Activated CD4-positive, alpha-beta memory T cell treated with anti-CD3 and anti-CD28 coated beads for 36 hours (primary cell): ENCODE measurements at regions of chr2 and their contacts with region 1.

Region 1: GRCh38 chr2:99337113-99338028 is at the start of gene EIF5B:
- DNase-seq: peak; percentile 95
- H3K4me3 Mint-ChIP-seq: no peak within 1 kb of the TSS
- H3K27ac Mint-ChIP-seq: no peak within 1 kb of the TSS
- H3K4me1 Mint-ChIP-seq: peaks cover 55% of the 10 kb centered on the region
- H3K27me3 Mint-ChIP-seq: no peaks in the 10 kb centered on the region
- total RNA-seq, gene EIF5B: 69.7 to 72.0 TPM

Region 2: GRCh38 chr2:98356729-98357128 is 980.6 kb before region 1 on chr2:
- CTCF ChIA-PET with region 1: no interaction called
- POLR2A ChIA-PET with region 1: no interaction called
- intact Hi-C with region 1: no loop called
- DNase-seq: no peak
- H3K4me3 Mint-ChIP-seq: no peak overlapping the region
- H3K27ac Mint-ChIP-seq: no peak overlapping the region
- H3K4me1 Mint-ChIP-seq: no peaks in the 10 kb centered on the region
- H3K27me3 Mint-ChIP-seq: peaks cover 12% of the 10 kb centered on the region

Region 3: GRCh38 chr2:99141110-99142108 is 196.0 kb before region 1 on chr2 and contains the start of gene C2orf15:
- CTCF ChIA-PET with region 1: no interaction called
- POLR2A ChIA-PET with region 1: interaction called, 4 read pairs
- intact Hi-C with region 1: loop called (anchors 1 kb)
- DNase-seq: peak; percentile 98
- H3K4me3 Mint-ChIP-seq: peak within 1 kb of the TSS; percentile 93
- H3K27ac Mint-ChIP-seq: peak within 1 kb of the TSS; percentile 88
- H3K4me1 Mint-ChIP-seq: peaks cover 19% of the 10 kb centered on the region
- H3K27me3 Mint-ChIP-seq: no peaks in the 10 kb centered on the region
- total RNA-seq, gene C2orf15: 0.48 to 0.50 TPM

Region 4: DNA sequence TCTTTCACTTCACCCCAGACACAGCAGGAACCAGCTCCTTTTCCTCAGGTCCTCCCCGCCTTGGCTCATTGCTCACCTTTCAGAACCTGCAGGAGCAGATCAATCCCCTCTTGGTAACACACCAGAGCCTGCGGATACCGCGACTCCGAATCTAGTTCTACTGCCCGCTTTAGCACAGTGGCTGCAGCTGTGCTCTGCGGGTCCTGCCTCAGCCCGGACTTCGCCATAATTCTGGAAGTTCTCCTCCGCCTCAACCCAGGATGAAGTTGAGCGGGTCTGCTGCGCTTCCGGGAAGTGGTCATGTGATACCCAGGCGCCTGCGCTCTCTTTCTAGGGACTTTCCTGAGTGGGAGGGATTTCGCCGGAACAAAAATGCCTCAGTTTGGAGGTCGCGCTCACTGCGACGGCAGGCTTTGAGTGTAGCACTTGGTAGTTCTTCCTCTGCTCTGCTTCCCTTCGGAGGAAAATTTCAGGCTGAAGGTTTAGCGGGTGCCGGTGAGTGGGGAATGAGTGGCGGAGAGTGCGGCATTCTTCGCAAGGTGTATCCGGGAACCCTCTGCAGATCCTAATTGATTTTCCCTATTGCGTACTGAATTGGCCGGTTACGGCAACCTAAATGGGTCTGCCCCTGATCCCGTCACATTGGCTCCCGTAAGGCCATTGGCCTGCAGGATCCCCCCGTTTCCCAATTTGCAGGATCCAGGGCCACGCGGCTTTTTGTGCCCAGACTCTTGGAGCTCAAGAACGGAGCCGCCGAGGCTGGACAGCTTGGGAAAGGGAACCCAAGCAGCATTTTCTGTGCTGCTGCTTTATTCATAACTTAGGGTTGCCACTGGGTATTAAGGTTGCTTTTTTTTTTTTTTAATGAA is 156.4 kb before region 1 on chr2 and contains the starts of genes MITD1 and MRPL30:
- CTCF ChIA-PET with region 1: interaction called, 7 read pairs
- POLR2A ChIA-PET with region 1: interaction called, 10 read pairs
- intact Hi-C with region 1: loop called (anchors 1 kb)
- DNase-seq: peak; percentile 95
- H3K4me3 Mint-ChIP-seq: peak within 1 kb of the TSS; percentile 98
- H3K27ac Mint-ChIP-seq: peak within 1 kb of the TSS; percentile 97
- H3K4me1 Mint-ChIP-seq: peaks cover 49% of the 10 kb centered on the region
- H3K27me3 Mint-ChIP-seq: no peaks in the 10 kb centered on the region
- total RNA-seq, gene MITD1: 67.4 to 75.5 TPM
- total RNA-seq, gene MRPL30: 30.3 to 30.8 TPM

Region 5: DNA sequence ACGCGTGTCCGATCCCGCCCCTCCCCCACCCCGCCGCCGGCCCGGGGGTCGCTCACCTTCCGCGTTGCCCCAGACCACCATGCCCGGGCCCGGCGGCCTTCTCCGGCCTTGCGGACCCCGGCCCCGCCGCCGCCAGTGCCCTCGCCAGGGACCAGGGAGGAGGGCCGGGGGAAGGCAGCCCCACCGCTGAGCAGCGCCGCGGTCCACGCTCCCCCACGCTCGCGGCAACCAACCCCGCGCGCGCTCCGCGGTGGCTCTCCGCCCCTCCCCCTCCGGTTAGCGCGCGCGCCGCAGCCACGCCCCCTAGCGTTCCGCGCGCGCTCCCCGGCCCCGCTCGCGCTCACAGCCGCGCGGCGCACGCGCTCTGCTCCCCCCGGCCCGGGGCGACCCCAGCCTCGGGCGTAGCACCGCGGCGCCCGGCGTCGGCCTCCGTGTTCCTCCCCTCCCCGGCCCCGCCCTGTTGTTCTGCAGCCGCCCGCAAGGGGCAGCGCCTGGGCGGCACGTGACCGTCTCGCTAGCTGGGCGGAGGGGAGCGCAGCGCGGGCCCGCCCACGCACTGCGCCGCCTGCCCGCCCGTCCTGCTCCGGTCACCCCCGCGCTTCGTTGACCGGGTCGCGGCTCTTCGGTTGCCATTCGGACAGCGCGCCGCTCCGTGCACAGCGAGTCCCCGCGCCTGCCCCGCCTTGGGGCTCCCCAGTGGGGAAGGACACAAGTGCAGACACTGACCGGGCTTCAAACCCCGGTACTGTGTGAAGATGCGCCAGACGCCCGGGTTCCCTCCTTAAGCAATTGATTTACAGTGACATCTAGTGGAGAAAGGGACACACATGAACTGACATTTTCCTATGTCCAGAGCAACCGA is 152.6 kb after region 1 on chr2 and contains the start of gene REV1:
- CTCF ChIA-PET with region 1: interaction called, 18 read pairs
- POLR2A ChIA-PET with region 1: interaction called, 4 read pairs
- intact Hi-C with region 1: loop called (anchors 1 kb)
- DNase-seq: peak; percentile 95
- H3K4me3 Mint-ChIP-seq: peak within 1 kb of the TSS; percentile 97
- H3K27ac Mint-ChIP-seq: peak within 1 kb of the TSS; percentile 91
- H3K4me1 Mint-ChIP-seq: peaks cover 32% of the 10 kb centered on the region
- H3K27me3 Mint-ChIP-seq: no peaks in the 10 kb centered on the region
- total RNA-seq, gene REV1: 22.6 to 30.6 TPM